Heart left ventricle (tissue), 16 donors: ENCODE measurements at regions of chr9 and their contacts with region 1.

Region 1: DNA sequence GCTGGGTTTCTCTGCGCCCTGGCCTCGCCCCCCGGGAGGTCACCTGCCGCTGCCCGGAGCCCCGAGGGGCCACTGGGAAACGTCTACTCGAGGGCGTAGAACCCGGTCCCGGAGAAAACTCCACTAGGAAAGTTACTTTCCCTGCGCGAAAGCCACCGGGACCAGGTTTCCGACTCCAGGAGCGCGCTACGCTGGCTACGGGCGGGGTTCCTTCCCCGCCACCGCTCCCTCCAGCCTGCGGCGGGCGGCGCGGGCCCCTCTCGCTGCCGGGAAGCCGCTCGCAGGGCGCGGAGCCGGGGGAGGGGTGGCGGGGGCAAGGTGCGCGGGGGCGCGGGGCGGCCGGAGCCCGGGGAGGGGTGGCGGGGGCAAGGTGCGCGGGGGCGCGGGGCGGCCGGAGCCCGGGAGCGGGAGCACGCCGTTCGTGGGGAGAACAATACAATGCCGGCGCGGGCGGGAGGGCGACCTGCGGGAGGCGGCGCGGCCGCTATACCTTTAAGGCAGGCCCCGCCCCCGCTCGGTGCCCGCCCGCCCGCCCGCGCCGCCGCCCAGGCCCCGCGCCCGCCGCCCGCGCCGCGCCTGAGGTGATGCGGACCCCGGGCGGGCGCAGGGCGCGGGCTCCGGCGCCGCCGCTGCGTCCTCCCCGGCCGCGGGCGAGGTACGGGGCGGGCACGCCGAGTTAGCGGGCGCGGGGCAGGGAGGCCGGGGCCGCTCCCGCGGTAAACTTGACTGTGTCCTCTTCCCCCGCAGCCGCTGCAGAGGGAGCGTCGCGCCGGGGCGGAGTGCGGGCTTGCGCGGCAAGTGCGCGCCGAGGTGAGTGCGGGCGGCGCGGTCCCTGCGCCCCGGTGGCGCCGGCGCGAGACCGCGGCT is 278.1 kb downstream of the AOPEP start:
- DNase-seq: peak; percentile 73 to 83 (median 78)
- ATAC-seq: peak in 3 of 4 donors; percentile 17 to 59 (median 44)
- H3K4me3 ChIP-seq: peak overlapping the region; percentile 61 to 94 (median 84)
- H3K27ac ChIP-seq: peak overlapping the region; percentile 95 to 100 (median 99)
- H3K4me1 ChIP-seq: peaks cover 0 to 57% (median 29%) of the 10 kb centered on the region in 12 donors
- H3K27me3 ChIP-seq: peaks cover 0 to 17% (median 0%) of the 10 kb centered on the region in 9 donors
- CTCF ChIP-seq: no peak
- POLR2A ChIP-seq: peak in 1 of 2 donors; percentile 60

Region 2: DNA sequence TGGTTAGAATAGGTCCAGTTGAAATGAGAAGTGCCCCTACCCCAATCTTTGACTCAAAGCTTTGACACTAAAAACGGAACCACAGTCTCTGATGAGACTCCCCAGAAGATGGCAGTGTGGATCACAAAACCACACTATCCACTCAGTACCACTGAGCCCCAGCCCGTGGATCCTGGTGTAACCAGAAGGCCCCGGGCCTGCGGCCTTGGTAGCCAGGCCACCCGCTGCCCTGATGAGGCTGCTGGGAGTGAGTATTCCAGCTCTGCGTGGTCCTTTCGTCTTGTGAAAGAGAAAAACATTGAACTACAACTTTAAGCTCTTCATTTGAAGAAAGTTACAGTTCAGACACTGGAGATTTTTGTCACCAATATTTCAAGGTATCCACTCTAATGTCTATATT is 323.1 kb before region 1 on chr9:
- intact Hi-C with region 1: loop called in 2 of 10 experiments (anchors 5 to 10 kb)
- DNase-seq: peak; percentile 69 to 87 (median 82)
- ATAC-seq: peak; percentile 92 to 98 (median 98)
- H3K4me3 ChIP-seq: no peak overlapping the region
- H3K27ac ChIP-seq: peak overlapping the region in 6 of 12 donors; percentile 11 to 47 (median 32)
- H3K4me1 ChIP-seq: peaks cover 0 to 9% (median 0%) of the 10 kb centered on the region in 12 donors
- H3K27me3 ChIP-seq: no peaks in the 10 kb centered on the region
- CTCF ChIP-seq: peak; percentile 62 to 85 (median 78)
- POLR2A ChIP-seq: no peak

Region 3: DNA sequence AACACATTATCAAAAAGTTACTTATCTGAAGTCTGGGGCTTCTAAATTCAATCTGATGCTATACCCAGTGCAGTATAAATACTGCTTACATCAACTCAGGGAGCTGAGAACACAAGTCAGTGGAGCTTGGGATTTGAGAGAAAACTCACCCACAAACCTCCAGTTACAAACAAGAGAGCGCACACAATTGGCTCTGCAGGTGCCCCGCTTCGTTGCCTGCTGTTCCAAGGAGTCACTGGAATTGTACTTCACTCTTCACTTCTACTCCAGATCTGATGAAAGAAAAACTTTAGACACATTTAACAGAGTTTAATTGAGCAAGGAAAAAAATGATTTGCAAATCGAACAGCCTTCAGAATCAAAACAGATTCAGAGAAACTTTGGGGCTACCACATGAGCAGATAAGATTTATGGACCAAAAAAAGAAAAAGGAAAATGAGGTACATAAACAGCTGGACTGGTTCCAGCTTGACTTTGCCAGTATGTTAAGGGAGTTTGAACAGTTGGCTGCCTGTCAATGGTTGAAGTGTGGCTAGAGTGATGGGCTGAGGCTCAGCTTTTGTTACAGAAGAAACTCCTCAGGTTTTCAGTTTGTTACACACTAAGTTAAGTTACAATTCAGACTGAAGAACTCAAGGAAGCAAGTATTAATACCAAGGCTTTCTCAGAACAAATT is 121.5 kb before region 1 on chr9:
- intact Hi-C with region 1: loop called in 2 of 10 experiments (anchors 5 kb)
- DNase-seq: peak in 1 of 5 donors; percentile 42
- ATAC-seq: peak in 1 of 4 donors; percentile 52
- H3K4me3 ChIP-seq: no peak overlapping the region
- H3K27ac ChIP-seq: peak overlapping the region in 11 of 12 donors; percentile 8 to 75 (median 52)
- H3K4me1 ChIP-seq: peaks cover 4 to 58% (median 33%) of the 10 kb centered on the region in 12 donors
- H3K27me3 ChIP-seq: no peaks in the 10 kb centered on the region
- CTCF ChIP-seq: no peak
- POLR2A ChIP-seq: no peak

Region 4: GRCh38 chr9:94952565-94953373 is 51.9 kb before region 1 on chr9:
- intact Hi-C with region 1: loop called in 5 of 10 experiments (anchors 5 to 10 kb)
- DNase-seq: peak in 2 of 5 donors; percentile 46 to 65
- ATAC-seq: peak; percentile 23 to 77 (median 56)
- H3K4me3 ChIP-seq: peak overlapping the region in 3 of 12 donors; percentile 1 to 15 (median 2)
- H3K27ac ChIP-seq: peak overlapping the region; percentile 43 to 88 (median 74)
- H3K4me1 ChIP-seq: peaks cover 10 to 56% (median 47%) of the 10 kb centered on the region in 12 donors
- H3K27me3 ChIP-seq: no peaks in the 10 kb centered on the region
- CTCF ChIP-seq: no peak
- POLR2A ChIP-seq: no peak

Region 5: DNA sequence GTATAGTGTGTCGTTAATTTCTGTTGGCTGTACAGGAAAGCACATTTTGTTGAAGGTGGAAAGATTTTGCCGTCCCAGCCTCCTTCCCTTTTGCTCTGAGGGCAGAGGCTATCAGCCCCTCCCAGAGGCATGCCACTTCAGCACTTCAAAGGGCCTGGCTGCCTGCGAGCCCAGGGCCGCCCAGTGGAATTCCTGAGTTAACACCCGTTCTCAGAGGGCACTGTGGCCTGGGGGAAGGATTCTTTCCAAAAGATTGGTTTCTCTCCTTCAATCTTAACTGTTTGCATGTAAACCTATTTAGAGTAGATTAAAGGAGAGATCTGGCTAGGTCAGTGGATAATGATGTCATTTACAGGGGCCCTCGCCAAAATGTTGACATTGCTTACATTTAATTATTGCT is 74.3 kb after region 1 on chr9:
- intact Hi-C with region 1: loop called in 2 of 10 experiments (anchors 5 kb)
- DNase-seq: no peak
- ATAC-seq: peak; percentile 44 to 56 (median 54)
- H3K4me3 ChIP-seq: no peak overlapping the region
- H3K27ac ChIP-seq: peak overlapping the region in 11 of 12 donors; percentile 51 to 81 (median 70)
- H3K4me1 ChIP-seq: peaks cover 31 to 100% (median 76%) of the 10 kb centered on the region in 12 donors
- H3K27me3 ChIP-seq: no peaks in the 10 kb centered on the region
- CTCF ChIP-seq: peak in 1 of 12 donors; percentile 11
- POLR2A ChIP-seq: no peak